ENCODE measurements at regions of chr17 and their contacts with region 1.

Region 1: GRCh38 chr17:18141210-18141803 is 32.8 kb downstream of the MYO15A start:
- DNase-seq: peak; percentile 78
- CTCF ChIP-seq: peak; percentile 60

Region 2: GRCh38 chr17:18153749-18154161 is 12.4 kb after region 1 on chr17:
- CTCF ChIA-PET with region 1: interaction called, 41 read pairs
- POLR2A ChIA-PET with region 1: no interaction called
- DNase-seq: peak; percentile 87
- CTCF ChIP-seq: no peak

Region 3: GRCh38 chr17:18161207-18162145 is 20.2 kb after region 1 on chr17:
- CTCF ChIA-PET with region 1: interaction called, 41 read pairs
- POLR2A ChIA-PET with region 1: no interaction called
- DNase-seq: peak; percentile 89
- CTCF ChIP-seq: no peak

Region 4: GRCh38 chr17:18183334-18184142 is 42.2 kb after region 1 on chr17 and contains the start of gene ALKBH5:
- CTCF ChIA-PET with region 1: interaction called, 51 read pairs
- POLR2A ChIA-PET with region 1: interaction called, 4 read pairs
- DNase-seq: peak; percentile 99
- CTCF ChIP-seq: no peak

Region 5: GRCh38 chr17:18217412-18218015 is 76.2 kb after region 1 on chr17:
- CTCF ChIA-PET with region 1: interaction called, 12 read pairs
- POLR2A ChIA-PET with region 1: no interaction called
- DNase-seq: peak; percentile 90
- CTCF ChIP-seq: peak; percentile 94

Measured in GM10248 (cell line).